ENCODE measurements at regions of chr1 and their contacts with region 1.

Region 1: GRCh38 chr1:26705788-26706311 is 10.0 kb downstream of the ARID1A start:
- DNase-seq: no peak
- ATAC-seq: no peak
- H3K4me3 Mint-ChIP-seq: peak overlapping the region; percentile 62
- H3K27ac Mint-ChIP-seq: peak overlapping the region; percentile 85
- H3K4me1 Mint-ChIP-seq: peaks cover 38% of the 10 kb centered on the region
- H3K27me3 Mint-ChIP-seq: no peaks in the 10 kb centered on the region
- CTCF ChIP-seq: no peak

Region 2: GRCh38 chr1:26574719-26575251 is 131.1 kb before region 1 on chr1:
- CTCF ChIA-PET with region 1: no interaction called
- POLR2A ChIA-PET with region 1: no interaction called
- intact Hi-C with region 1: no loop called
- DNase-seq: peak; percentile 35
- ATAC-seq: no peak
- H3K4me3 Mint-ChIP-seq: no peak overlapping the region
- H3K27ac Mint-ChIP-seq: peak overlapping the region; percentile 73
- H3K4me1 Mint-ChIP-seq: peaks cover 54% of the 10 kb centered on the region
- H3K27me3 Mint-ChIP-seq: no peaks in the 10 kb centered on the region
- CTCF ChIP-seq: no peak

Region 3: DNA sequence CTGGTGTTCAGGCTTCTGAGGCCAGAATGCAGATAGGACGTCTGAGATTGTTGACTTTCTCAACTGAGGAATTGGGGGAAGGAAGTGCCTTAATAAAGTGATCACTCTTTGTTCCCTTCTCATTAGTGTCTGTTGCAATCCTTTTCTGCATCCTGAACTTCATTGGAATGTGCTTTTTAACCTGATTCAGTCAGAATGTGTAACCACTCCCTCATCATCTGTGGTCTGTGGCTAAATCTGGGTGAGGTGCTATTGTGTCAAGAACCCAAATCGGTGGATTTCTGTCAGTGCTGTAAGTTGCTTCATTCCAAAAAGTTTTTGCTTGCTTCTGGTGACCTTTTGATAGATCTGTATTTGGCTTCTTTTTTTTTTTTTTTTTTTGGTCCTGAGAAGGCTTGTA is 28.1 kb after region 1 on chr1:
- CTCF ChIA-PET with region 1: interaction called, 15 read pairs
- POLR2A ChIA-PET with region 1: interaction called, 16 read pairs
- intact Hi-C with region 1: no loop called
- DNase-seq: peak; percentile 56
- ATAC-seq: peak; percentile 40
- H3K4me3 Mint-ChIP-seq: no peak overlapping the region
- H3K27ac Mint-ChIP-seq: peak overlapping the region; percentile 79
- H3K4me1 Mint-ChIP-seq: peaks cover 63% of the 10 kb centered on the region
- H3K27me3 Mint-ChIP-seq: no peaks in the 10 kb centered on the region
- CTCF ChIP-seq: no peak

Region 4: DNA sequence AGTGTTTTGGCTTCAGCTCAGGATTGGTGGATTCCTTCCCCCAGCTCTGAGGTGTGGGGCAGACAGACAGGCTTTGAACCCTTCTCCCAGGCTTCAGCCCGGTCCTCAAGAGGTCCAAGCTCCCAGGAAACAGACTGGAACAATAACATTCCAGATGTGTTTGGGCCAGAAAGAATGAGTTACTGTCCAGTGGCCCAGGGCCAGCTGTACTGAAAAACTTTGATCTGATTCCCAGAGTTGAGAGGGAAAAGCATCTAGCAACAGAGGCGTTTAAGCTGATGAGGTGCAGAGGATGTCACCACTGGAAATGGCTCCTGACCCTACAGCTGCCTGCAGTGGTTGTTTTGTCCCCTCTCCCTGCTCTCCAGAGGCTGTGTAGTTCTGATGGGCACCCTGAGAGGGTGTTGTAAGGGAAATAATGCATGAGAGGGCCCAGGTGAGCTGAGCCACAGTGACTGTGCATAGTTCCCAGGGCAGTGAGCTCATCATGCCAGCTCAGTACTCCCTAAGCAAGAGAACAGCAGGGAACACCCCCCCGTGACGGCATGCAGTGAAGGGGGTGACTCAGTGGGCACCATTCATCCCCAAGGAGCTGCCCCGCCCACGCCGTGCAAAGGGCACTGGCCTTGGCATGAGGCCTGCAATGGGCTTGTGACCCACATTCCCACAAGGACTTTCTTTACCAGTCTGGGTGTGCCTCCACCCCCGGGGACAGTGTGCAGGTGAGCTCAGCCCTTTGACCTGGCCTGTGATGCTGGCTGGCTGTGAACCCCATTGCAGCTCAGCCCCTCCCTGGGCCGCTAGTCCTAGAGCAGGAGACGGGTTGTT is 143.3 kb after region 1 on chr1:
- CTCF ChIA-PET with region 1: no interaction called
- POLR2A ChIA-PET with region 1: no interaction called
- intact Hi-C with region 1: no loop called
- DNase-seq: no peak
- ATAC-seq: no peak
- H3K4me3 Mint-ChIP-seq: no peak overlapping the region
- H3K27ac Mint-ChIP-seq: peak overlapping the region; percentile 38
- H3K4me1 Mint-ChIP-seq: peaks cover 4% of the 10 kb centered on the region
- H3K27me3 Mint-ChIP-seq: no peaks in the 10 kb centered on the region
- CTCF ChIP-seq: no peak

Region 5: DNA sequence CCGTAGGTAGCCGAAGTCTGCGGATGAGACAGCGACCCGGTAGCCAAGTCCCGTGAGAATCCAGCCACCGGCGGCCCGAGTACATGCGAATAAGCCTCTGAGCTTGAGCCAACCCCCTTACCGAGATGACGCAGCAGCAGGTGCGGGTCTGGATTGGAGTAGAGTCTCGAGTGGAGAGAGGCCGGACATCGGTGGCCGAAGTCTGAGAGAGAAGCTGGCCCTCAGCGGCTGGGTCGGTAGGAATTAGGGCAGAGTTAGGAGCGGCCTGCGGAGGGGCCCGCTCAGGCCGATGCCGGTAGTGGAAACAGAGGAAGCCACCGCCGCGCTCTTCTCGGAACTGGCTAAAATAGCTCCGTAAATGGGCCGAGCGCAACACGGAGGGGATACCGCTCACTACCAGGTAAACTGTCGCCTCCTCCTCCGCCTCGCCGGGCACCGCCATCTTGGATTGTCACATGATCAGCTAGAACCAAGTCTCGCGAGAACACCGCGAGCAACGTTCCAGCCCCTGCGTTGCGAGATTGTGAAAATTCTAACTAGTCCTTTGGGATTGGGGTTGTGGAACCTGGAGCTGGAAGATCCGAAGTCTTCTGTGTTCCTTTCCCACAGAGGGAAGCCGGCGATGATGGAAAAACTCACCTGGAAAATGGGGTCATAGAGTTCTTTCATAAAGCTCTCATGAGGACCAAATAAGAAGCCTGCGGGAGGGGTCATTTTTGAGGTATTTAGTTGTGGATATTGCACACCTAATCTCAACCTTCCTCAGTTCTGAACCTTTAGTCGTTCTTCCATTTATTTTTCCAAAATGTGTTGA is 194.4 kb after region 1 on chr1 and contains the start of gene GPATCH3:
- CTCF ChIA-PET with region 1: no interaction called
- POLR2A ChIA-PET with region 1: no interaction called
- intact Hi-C with region 1: no loop called
- DNase-seq: peak; percentile 95
- ATAC-seq: peak; percentile 95
- H3K4me3 Mint-ChIP-seq: peak within 1 kb of the TSS; percentile 93
- H3K27ac Mint-ChIP-seq: peak within 1 kb of the TSS; percentile 100
- H3K4me1 Mint-ChIP-seq: peaks cover 34% of the 10 kb centered on the region
- H3K27me3 Mint-ChIP-seq: no peaks in the 10 kb centered on the region
- CTCF ChIP-seq: no peak
- total RNA-seq, gene GPATCH3: 8.7 to 9.6 TPM